Activated CD4-positive, alpha-beta T cell treated with anti-CD3 and anti-CD28 coated beads, Interleukin-2, amount 10 ng/mL, durations not matched to agents 24 days and 14 days (primary cell): ENCODE measurements at regions of chr7 and their contacts with region 1.

Region 1: DNA sequence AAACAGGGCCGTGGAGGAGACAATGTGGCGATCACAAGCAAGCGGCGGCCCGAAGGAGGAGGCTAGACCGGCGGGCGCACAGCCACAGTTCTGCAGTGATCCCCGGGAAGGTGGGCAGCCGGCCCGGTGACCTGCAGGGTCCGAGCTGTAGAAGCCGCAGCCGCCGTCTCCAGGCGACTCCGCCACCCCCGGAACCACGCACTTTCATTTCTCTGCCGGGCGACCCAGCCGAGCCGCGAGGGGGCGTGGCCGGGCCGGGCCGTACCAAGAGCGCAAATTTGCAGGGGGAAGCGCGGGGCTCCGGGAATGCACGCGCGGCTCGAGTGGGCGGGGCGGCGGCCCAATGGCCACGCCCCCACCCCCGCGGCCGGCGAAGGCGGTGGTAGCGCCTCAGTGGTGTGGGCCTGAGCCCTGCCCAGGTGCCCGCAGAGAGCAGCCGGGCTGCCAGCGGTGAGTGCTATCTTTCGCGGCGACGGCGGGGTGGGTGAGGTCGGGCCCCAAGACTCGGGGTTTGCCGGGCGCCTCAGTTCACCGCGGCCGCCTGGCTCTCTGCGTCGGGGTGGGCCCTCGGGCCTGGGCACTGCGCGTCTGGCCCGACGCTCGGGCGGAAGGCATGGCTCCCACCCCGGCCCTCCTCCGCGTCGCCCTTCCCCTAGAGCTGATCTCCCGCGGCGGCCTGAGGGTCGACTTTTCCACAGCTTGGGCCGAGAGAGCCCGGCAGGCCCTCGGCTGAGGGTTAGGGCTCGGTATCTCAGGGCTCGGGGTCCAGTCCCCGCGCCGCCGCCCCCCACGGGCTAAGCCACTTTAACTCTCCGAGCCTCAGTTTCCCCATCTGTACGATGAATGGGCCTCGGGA is at the start of gene POR:
- DNase-seq: peak; percentile 100
- H3K4me3 Mint-ChIP-seq: peak within 1 kb of the TSS; percentile 91
- H3K27ac Mint-ChIP-seq: peak within 1 kb of the TSS; percentile 90
- H3K4me1 Mint-ChIP-seq: peaks cover 22% of the 10 kb centered on the region
- H3K27me3 Mint-ChIP-seq: no peaks in the 10 kb centered on the region
- total RNA-seq, gene POR: 69.4 and 75.0 TPM in 2 replicates

Region 2: DNA sequence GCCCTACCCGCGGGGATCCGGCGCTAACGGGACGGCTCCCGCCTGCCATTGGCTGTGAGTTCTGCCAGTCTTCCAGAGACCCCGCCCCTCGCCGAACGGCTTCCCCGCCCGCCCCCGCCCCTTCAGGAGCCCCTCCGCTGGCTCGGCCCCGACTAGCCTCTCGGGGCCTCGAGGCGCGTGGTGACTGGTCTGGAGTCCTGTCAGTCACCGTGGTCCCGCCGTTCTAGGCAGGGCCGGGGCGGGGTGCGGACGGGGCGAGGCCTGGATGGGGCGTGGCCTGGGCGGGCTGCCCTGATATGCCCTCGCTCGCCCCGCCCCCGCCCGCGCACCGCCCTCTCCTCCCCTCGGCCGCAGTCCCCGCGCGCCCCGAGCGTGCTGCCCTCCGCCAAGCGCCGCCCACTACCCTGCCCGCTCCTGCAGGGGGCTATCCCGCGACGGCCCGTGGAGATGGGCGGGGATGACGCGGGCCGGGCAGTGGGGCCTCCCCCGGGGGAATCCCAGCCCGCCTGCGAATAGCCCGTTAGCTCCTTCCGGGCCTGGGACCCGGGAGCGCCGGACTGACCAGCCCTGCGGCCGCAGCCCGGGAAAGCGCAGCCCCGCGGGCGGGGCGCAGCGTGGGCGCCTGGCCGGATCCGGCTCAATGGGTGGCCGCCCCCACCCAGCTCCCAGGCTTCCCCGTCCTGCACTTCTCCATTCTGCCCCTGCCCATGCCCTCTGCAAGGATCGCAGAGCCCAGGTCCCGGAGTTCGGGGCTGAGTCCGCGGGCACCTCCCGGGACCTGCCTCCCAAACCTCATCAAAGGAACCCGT is 175.8 kb before region 1 on chr7:
- intact Hi-C with region 1: loop called (anchors 1 kb)
- DNase-seq: peak; percentile 100
- H3K4me3 Mint-ChIP-seq: peak overlapping the region; percentile 90
- H3K27ac Mint-ChIP-seq: peak overlapping the region; percentile 97
- H3K4me1 Mint-ChIP-seq: peaks cover 16% of the 10 kb centered on the region
- H3K27me3 Mint-ChIP-seq: peaks cover 25% of the 10 kb centered on the region